CD4-positive, alpha-beta memory T cell (primary cell): ENCODE measurements at regions of chr5 and their contacts with region 1.

Region 1: DNA sequence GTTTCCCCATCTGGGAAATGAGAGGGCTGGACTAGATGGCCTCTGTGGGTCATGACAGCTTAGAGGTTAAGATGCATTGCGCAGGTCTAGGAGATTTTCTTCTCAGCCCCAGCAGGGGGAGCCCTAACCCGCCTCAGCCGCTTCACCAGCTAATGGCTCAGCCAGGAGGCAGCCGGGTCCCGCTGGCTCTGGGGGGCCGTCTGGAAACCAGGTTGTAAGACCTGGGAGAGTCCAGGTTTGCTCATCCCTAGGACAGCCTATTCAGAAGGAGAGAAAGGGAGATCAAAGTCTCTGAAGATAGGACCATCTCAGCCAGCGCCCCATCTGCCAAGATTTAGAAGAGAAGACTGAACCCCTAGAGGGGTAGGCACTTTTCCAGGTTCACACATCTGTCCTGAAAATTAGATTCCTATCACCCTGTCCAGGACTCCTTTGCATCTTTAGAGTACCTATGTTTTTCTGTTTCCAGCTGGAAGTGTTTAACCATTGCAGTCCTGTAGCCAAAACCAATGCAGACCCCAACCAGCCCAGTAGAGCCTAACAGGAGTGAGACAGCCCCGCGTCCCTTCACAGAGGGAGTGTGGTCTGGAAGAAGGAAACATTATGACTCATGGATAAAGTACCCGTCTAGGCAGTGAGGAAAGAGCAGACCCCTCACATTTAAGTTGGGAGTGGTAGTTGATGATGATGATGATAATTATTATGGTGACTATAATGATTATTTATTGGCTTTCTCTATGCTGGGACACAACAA is 27.5 kb downstream of the SPARC start:
- DNase-seq: peak; percentile 66 to 76 (median 74)
- H3K4me3 ChIP-seq: no peak overlapping the region
- H3K4me3 Mint-ChIP-seq: no peak overlapping the region
- H3K27ac ChIP-seq: no peak overlapping the region
- H3K27ac Mint-ChIP-seq: peak overlapping the region in 1 of 7 donors; percentile 41
- H3K4me1 ChIP-seq: peaks cover 12% of the 10 kb centered on the region
- H3K4me1 Mint-ChIP-seq: peaks cover 4 to 18% (median 6%) of the 10 kb centered on the region in 4 donors
- H3K27me3 ChIP-seq: no peaks in the 10 kb centered on the region
- H3K27me3 Mint-ChIP-seq: peaks cover 0 to 14% of the 10 kb centered on the region in 2 donors

Region 2: DNA sequence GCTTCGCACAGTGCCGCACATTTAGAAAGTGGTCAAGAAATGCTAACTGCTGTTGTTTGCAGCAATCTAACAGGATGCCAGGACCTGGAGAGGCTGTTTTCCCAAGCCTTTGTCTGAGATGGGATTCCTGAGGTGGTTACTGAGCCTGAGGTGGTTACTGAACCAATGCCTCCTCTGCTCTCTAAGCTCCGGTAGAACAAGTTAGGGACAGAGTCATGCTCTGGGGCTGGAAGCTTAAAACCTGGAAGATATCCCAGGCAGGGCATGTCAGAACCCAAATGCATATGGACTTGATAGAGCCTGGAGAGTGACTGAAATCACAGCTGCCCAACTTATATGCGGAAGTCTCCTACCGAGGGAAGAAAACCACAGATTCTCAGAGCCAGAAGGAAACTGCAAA is 21.5 kb before region 1 on chr5:
- CTCF ChIA-PET with region 1: interaction called, 12 read pairs
- POLR2A ChIA-PET with region 1: no interaction called
- intact Hi-C with region 1: no loop called
- DNase-seq: no peak
- H3K4me3 ChIP-seq: no peak overlapping the region
- H3K4me3 Mint-ChIP-seq: no peak overlapping the region
- H3K27ac ChIP-seq: no peak overlapping the region
- H3K27ac Mint-ChIP-seq: no peak overlapping the region
- H3K4me1 ChIP-seq: peaks cover 9% of the 10 kb centered on the region
- H3K4me1 Mint-ChIP-seq: peaks cover 0 to 13% (median 4%) of the 10 kb centered on the region in 4 donors
- H3K27me3 ChIP-seq: no peaks in the 10 kb centered on the region
- H3K27me3 Mint-ChIP-seq: peaks cover 0 to 3% of the 10 kb centered on the region in 2 donors

Region 3: GRCh38 chr5:151740336-151740942 is 81.3 kb after region 1 on chr5:
- CTCF ChIA-PET with region 1: interaction called, 22 read pairs
- POLR2A ChIA-PET with region 1: no interaction called
- intact Hi-C with region 1: loop called (anchors 1 kb)
- DNase-seq: peak; percentile 38 to 58 (median 52)
- H3K4me3 ChIP-seq: no peak overlapping the region
- H3K4me3 Mint-ChIP-seq: peak overlapping the region in 1 of 8 donors; percentile 40
- H3K27ac ChIP-seq: no peak overlapping the region
- H3K27ac Mint-ChIP-seq: peak overlapping the region in 4 of 7 donors; percentile 5 to 75 (median 55)
- H3K4me1 ChIP-seq: peaks cover 19% of the 10 kb centered on the region
- H3K4me1 Mint-ChIP-seq: peaks cover 14 to 24% (median 22%) of the 10 kb centered on the region in 4 donors
- H3K27me3 ChIP-seq: no peaks in the 10 kb centered on the region
- H3K27me3 Mint-ChIP-seq: no peaks in the 10 kb centered on the region

Region 4: DNA sequence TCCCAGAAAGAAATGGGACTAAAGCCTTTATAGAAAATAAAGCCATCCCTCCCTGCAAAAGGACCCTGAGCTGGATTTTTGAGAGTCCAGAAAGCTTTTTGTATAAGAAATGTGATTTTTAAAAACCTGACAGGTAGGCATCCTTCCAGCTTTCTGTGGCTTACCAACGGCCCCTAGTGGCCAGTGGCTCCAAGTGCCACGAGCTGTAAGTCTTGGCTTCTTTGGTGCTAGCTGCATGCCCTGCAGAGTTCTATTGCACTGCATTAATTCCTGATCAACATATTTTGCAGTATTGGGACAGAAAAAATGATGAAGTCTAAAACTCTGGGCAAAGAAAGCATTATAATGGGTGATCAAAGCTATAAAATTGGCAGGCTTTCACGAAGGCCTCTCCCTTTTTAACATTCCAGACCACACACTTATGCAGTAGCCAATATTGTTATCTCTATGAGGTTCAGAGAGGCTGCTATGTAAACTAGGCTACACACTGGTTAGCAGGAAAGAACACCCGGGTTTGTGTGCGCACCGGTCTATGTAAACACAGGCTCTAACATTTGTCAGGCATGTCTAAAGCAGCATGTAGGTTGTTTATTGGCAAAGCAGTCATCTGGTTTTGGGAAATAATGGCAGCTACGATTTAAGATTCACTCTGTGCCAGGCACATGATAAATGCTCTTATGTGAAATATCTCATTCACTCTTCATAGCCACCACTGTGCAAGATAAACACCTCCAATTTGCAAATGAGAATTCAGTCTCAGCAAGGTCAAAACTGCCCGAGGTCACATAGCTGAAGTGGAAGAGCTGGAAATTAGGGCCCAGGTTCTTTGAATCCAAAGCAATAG is 690.7 kb after region 1 on chr5:
- CTCF ChIA-PET with region 1: interaction called, 22 read pairs
- POLR2A ChIA-PET with region 1: no interaction called
- intact Hi-C with region 1: no loop called
- DNase-seq: peak in 4 of 5 donors; percentile 12 to 30 (median 20)
- H3K4me3 ChIP-seq: no peak overlapping the region
- H3K4me3 Mint-ChIP-seq: no peak overlapping the region
- H3K27ac ChIP-seq: no peak overlapping the region
- H3K27ac Mint-ChIP-seq: no peak overlapping the region
- H3K4me1 ChIP-seq: no peaks in the 10 kb centered on the region
- H3K4me1 Mint-ChIP-seq: no peaks in the 10 kb centered on the region
- H3K27me3 ChIP-seq: no peaks in the 10 kb centered on the region
- H3K27me3 Mint-ChIP-seq: peaks cover 3 to 8% of the 10 kb centered on the region in 2 donors